Left cardiac atrium (tissue), 4 donors: ENCODE measurements at regions of chr5 and their contacts with region 1.

Region 1: DNA sequence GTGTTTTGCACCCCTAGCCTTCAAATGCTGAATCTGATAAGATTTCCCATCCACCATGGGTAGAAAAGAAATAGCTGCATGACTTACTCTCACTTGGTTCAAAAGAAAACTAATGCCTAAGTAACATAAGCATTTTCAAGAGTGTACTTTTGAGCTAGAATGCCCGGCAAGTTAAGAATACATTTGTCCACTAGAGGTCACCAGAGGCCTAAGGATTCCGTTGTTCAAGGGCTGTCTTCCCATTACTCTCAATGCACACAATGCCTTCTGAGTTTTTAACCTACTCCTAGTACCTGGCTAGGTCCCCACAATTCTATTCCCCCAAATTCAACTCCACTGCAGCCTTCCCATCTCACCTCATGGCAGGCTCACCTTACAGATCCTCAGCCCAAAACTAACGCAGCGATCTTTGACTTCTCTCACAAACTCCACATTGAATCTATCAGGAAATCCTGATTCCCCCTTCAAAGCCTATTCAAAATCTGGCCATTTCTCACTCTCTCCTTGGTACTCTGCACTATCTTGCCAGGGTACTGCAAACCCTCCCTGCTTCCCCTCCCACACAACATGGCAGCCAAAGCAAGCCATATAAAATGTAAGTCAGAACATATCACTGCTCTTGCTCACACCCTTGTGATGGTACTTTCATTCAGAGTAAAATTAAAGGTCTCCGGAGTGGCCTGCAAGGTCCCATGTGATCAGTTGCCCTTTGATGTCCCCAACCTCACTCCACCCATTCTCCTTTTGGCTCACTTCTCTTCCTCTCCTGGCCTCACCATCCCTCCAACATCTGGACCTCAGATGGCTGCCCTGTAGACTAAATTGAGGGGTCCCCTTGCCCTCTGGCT is 13.4 kb downstream of the OXCT1 start:
- DNase-seq: no peak
- ATAC-seq: peak; percentile 63 to 80

Region 2: DNA sequence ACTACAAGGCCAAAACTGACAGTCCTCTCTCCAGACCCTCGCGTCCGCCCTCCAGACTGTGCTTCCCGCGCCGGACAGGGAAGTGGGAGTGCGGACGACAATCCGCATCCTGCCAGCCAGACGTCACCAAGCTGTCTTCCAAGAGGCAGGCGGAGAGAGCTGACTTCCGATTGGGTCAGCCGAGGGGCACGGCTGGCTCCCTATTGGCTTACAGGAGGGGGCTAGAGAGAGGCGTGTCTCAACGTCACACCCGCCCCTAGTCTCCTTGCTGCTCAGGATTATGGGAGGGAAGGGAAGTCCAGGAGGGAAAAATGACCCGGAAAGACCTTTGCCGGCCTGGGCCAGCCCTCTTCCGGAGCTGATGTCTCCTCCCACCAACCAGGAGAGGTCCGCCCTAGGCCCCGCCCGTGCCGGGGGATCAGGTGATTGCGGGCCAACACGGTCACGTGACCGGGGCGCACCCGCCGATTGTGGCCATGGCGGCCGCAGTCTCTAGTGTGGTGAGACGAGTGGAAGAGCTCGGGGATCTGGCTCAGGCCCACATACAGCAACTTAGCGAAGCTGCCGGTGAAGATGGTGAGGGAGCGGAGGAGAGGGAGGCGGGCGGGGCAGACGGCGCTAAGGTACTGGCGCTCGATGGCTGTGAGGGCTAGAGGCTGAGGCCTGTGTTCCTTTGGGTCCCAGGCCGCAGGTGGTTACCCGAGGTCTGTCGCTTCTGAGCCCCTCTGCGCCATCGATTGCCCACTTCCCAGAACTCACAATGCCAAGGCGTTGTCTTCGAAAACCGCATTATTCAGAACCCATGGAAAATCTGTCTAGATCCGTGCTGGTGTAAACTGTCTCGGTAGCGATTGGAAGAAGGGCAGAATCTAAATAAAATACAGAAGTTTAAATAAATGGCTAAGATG is 47.3 kb after region 1 on chr5 and contains the start of gene RIMOC1:
- intact Hi-C with region 1: loop called in 1 of 2 experiments (anchors 10 kb)
- DNase-seq: peak; percentile 98
- ATAC-seq: peak; percentile 99
- total RNA-seq, gene RIMOC1: 15.1 to 17.4 TPM

Region 3: DNA sequence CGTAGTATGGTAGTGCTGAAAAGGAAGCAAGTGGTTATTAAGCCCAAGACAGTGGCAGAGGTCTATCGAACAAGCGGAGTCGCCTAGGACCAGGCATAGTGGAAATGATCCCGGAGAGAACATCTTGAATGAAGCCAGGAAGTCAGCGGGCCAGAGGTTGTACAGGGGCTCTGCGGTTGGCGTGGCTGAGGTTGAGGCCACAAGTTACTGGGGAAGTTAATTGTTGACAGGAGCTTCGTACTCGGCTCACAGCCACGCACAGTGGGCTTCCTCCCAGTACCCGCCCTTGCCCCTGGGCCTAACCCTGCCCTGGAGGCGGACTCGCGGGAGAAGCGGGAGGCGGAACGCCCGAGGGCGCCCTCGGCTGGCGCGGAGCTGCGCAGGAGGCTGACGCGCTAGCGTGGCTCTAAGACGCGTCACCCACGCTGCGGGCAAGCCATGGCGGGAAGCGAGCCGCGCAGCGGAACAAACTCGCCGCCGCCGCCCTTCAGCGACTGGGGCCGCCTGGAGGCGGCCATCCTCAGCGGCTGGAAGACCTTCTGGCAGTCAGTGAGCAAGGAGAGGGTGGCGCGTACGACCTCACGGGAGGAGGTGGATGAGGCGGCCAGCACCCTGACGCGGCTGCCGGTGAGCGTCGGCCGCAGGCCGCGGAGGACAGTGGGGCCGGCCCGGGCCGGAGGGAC is 68.1 kb after region 1 on chr5 and contains the start of gene FBXO4:
- intact Hi-C with region 1: loop called (anchors 5 to 10 kb)
- DNase-seq: peak; percentile 93
- ATAC-seq: peak; percentile 99
- total RNA-seq, gene FBXO4: 6.0 to 6.6 TPM

Region 4: GRCh38 chr5:42057254-42057690 is 200.4 kb after region 1 on chr5:
- intact Hi-C with region 1: loop called (anchors 2 to 5 kb)
- DNase-seq: no peak
- ATAC-seq: peak in 1 of 2 donors; percentile 44

Region 5: DNA sequence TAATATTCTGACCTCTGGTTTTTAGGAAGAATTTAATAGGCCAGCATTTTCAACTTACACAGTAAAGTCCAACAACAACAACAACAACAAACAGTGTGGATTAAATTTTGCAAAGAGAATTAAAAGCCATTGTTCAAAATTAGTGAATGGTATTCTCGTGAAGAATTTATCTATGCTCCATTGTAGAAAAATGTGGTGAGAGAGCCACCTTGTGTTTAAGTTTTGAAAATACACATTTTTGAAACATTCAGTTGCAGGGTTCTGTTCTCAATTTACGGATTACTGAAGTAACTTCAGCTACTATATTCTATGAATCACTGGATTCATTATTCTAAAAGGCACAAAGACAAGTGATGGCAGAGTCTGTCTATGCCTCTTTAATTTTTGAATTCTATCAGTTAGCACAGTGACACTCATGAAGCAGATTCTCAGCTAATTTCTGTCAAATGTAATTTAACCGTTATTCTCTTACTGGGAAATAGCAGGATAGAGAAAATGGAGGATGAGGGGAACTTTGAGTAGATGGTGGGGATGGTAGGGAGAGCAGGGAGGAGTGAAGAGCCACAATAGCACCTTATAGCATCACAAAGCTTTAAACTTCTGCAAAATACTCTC is 910.7 kb after region 1 on chr5:
- intact Hi-C with region 1: loop called (anchors 2 to 5 kb)
- DNase-seq: no peak
- ATAC-seq: peak; percentile 27 to 40

Region 6: DNA sequence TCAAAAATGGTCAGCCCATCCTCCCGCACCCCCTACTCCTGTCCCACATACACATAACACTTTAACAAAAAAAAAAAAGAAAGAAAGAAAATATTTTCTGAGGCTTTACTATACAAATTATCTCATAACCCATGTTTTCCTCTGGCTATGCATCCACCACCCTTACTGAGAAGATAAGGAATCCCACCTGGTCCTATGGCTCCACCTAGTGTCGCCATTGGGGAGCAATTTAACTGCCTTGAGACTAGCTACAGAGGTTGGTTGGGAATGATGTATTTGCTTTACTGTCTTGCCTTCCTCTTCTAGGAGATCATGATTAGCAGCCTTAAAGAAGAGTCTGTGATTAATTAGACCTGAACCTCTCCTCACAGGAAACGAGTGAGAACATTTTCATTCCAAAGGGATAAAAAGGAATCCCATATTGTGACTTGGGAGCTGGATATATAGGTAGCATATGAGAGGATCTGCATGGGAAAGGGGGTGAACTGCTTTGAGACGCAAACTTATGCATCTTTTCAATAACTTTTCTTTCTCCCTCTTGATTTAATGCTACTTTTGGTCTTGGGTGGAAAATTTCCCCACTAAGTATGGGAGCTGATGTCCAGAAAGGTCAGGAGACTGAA is 1032.6 kb after region 1 on chr5:
- intact Hi-C with region 1: loop called in 1 of 2 experiments (anchors 10 kb)
- DNase-seq: peak; percentile 73
- ATAC-seq: peak; percentile 90 to 92